ENCODE measurements at regions of chr9 and their contacts with region 1.

Region 1: DNA sequence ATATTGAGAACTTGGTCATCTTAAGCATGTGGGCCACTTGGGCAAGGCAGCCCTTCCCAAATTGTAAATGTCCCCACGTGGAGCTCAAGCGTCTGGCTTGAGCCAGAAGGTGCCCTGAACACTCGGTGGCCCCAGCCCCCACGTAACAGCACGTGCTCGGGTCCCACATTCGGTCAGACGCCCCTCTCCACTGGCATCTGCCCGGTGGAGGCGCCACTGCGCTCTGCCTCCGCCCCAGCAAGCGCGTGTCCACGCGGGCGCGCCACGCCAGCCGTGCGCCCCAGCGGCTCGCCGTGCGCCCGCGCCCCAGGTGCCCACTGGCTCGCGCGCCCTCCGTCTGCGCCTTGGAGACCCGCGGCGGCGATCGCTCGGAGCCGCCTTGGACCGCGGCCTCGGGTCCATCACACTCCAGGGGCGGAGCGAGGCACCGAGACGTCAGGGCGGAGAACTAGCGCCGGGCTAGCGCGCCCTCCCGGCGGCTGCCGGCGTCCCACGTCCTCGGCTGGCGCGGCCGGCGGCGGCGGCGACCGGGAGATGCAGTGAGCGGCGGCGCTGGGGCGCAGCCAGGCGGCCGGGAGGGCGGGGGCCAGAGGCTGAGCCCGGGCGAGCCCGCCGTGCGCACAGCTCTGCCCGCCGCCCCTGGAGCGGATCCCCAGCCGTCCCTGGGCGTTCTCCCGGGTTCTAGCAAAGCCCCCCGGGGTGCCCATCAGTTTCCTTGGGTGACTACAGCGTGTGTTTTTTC is at the start of gene PALM2AKAP2:
- DNase-seq: peak; percentile 77 to 86 (median 82)
- ATAC-seq: peak; percentile 71 to 94 (median 88)
- H3K4me3 ChIP-seq: peak within 1 kb of the TSS; percentile 58 to 89 (median 78)
- H3K27ac ChIP-seq: peak within 1 kb of the TSS; percentile 38 to 94 (median 86)
- H3K4me1 ChIP-seq: peaks cover 0 to 24% (median 3%) of the 10 kb centered on the region in 12 donors
- H3K27me3 ChIP-seq: peaks cover 0 to 15% (median 0%) of the 10 kb centered on the region in 9 donors
- CTCF ChIP-seq: peak in 9 of 12 donors; percentile 12 to 53 (median 45)
- POLR2A ChIP-seq: peak in 1 of 2 donors; percentile 25
- total RNA-seq, gene PALM2AKAP2: 38.7 to 132 (median 83.9) TPM

Region 2: GRCh38 chr9:109469646-109470358 is 310.1 kb before region 1 on chr9:
- intact Hi-C with region 1: no loop called
- DNase-seq: peak in 4 of 5 donors; percentile 61 to 66 (median 64)
- ATAC-seq: peak; percentile 79 to 89 (median 84)
- H3K4me3 ChIP-seq: no peak overlapping the region
- H3K27ac ChIP-seq: peak overlapping the region in 8 of 12 donors; percentile 1 to 47 (median 23)
- H3K4me1 ChIP-seq: peaks cover 0 to 33% (median 11%) of the 10 kb centered on the region in 12 donors
- H3K27me3 ChIP-seq: peaks cover 0 to 17% (median 0%) of the 10 kb centered on the region in 9 donors
- CTCF ChIP-seq: peak; percentile 79 to 91 (median 86)
- POLR2A ChIP-seq: no peak

Region 3: DNA sequence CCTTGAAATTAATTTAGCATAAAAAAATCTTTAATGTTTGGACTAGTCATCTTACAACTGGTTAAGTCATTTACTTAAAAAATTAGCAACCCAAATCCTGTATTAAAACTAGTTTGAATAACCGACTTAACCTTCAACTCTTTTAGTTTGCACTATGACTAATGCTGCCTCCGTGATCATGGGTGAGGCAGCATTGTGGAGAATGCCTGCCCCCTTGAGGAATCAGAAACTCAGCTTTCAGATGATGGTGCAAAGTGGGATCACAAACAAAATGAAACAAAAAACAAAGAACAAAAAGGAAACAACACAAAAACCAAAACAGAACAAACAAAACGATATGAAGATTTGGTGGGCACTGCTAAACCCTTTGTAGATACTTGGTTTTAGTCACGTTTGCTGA is 126.9 kb before region 1 on chr9:
- intact Hi-C with region 1: loop called in 1 of 10 experiments (anchors 10 kb)
- DNase-seq: peak in 2 of 5 donors; percentile 21 to 22
- ATAC-seq: peak; percentile 72 to 86 (median 78)
- H3K4me3 ChIP-seq: no peak overlapping the region
- H3K27ac ChIP-seq: no peak overlapping the region
- H3K4me1 ChIP-seq: peaks cover 0 to 4% (median 0%) of the 10 kb centered on the region in 12 donors
- H3K27me3 ChIP-seq: no peaks in the 10 kb centered on the region
- CTCF ChIP-seq: peak in 11 of 12 donors; percentile 24 to 65 (median 50)
- POLR2A ChIP-seq: no peak

Region 4: DNA sequence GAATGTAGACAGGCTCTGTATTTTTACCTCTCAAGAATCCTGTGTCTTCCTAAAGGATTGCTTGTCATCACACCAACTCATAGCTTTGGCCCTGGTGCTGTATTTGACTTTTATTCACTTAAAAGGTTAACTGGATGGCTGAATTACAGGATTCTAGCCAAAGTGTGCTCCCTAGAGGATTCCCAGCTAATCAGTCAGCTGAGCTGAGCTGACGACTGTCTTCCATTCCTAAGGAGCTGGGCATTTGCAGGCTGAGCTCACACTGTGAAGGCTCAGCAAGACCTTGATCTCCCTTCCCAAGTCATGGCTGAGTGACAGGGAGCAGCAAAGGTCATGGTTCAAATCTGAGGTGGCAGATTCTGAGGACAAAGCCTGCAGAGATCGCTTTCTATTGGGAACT is 58.9 kb before region 1 on chr9:
- intact Hi-C with region 1: loop called in 1 of 10 experiments (anchors 10 kb)
- DNase-seq: no peak
- ATAC-seq: peak in 1 of 4 donors; percentile 41
- H3K4me3 ChIP-seq: no peak overlapping the region
- H3K27ac ChIP-seq: no peak overlapping the region
- H3K4me1 ChIP-seq: peaks cover 0 to 5% (median 0%) of the 10 kb centered on the region in 12 donors
- H3K27me3 ChIP-seq: no peaks in the 10 kb centered on the region
- CTCF ChIP-seq: no peak
- POLR2A ChIP-seq: no peak

Region 5: DNA sequence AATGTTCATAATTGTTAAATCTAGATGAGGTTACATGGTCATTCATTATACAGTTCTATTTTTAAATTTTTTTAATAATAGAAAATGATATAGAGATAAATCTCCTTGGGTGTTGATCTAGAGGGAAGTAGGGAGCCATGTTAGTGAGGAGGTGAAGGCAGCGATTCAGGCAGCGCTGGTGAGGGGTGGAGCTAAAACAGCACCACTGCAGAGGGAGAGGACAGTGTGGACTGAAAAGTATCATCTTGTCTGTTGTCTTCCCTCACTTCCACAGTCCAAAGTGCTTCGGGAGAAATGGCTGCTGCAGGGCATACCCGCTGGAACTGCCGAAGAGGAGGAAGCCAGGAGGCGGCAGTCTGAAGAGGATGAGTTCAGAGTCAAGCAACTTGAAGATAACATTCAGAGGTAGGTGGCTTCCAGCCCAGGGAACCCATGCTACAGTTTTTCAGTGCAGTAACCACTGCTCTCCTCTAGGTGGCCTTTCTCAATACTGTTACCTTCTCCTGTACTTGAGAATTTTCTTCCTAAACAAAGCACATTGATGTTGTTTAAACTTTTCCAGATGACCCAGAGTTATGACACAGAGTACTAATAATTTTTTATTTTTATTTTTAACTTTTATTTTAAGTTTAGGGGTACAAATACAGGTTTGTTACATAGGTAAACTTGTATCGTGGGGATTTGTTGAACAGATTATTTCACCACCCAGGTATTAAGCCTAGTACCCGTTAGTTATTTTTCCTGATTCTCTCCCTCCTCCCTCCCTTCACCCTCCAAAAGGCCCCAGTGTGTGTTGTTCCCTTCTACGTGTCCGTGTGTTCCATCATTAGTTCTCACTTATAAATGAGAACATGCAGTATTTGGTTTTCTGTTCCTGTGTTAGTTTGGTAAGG is 100.6 kb after region 1 on chr9:
- intact Hi-C with region 1: loop called in 2 of 10 experiments (anchors 5 to 10 kb)
- DNase-seq: no peak
- ATAC-seq: no peak
- H3K4me3 ChIP-seq: no peak overlapping the region
- H3K27ac ChIP-seq: no peak overlapping the region
- H3K4me1 ChIP-seq: peaks cover 0 to 20% (median 8%) of the 10 kb centered on the region in 12 donors
- H3K27me3 ChIP-seq: no peaks in the 10 kb centered on the region
- CTCF ChIP-seq: peak; percentile 38 to 67 (median 56)
- POLR2A ChIP-seq: no peak

Region 6: GRCh38 chr9:109894921-109895758 is 115.3 kb after region 1 on chr9:
- intact Hi-C with region 1: loop called in 1 of 10 experiments (anchors 5 kb)
- DNase-seq: peak in 4 of 5 donors; percentile 32 to 61 (median 37)
- ATAC-seq: peak; percentile 30 to 82 (median 64)
- H3K4me3 ChIP-seq: no peak overlapping the region
- H3K27ac ChIP-seq: peak overlapping the region in 10 of 12 donors; percentile 16 to 61 (median 44)
- H3K4me1 ChIP-seq: peaks cover 0 to 41% (median 8%) of the 10 kb centered on the region in 12 donors
- H3K27me3 ChIP-seq: no peaks in the 10 kb centered on the region
- CTCF ChIP-seq: no peak
- POLR2A ChIP-seq: no peak

Region 7: GRCh38 chr9:109918339-109919163 is 138.7 kb after region 1 on chr9:
- intact Hi-C with region 1: no loop called
- DNase-seq: no peak
- ATAC-seq: peak in 3 of 4 donors; percentile 43 to 53 (median 52)
- H3K4me3 ChIP-seq: peak overlapping the region in 1 of 12 donors; percentile 12
- H3K27ac ChIP-seq: peak overlapping the region in 9 of 12 donors; percentile 0 to 56 (median 22)
- H3K4me1 ChIP-seq: peaks cover 0 to 61% (median 35%) of the 10 kb centered on the region in 12 donors
- H3K27me3 ChIP-seq: no peaks in the 10 kb centered on the region
- CTCF ChIP-seq: no peak
- POLR2A ChIP-seq: no peak

Measured in heart left ventricle (tissue), 16 donors.